ENCODE measurements at regions of chr13 and their contacts with region 1.

Region 1: DNA sequence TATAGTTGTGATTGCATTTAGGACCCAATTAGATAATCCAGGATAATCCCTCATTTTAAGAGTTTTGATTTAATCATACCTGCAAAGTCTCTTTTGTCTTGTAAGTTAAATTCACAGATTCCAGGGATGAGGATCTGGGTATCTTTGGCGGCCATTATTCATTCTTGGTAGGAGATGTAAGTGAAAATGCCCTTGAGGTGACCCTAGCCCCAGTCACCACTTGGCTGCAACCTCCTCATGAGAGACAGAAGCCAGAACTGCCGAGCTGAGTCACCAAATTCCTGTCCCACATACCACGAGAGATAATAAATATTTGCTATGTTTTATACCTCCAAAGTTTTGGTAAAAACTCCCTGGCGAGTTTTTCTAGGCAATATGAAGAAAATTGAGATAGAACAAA is 389.4 kb downstream of the RFC3 start:
- DNase-seq: no peak
- H3K4me3 ChIP-seq: no peak overlapping the region
- H3K27ac ChIP-seq: peak overlapping the region in 3 of 4 donors; percentile 68 to 83 (median 81)
- H3K4me1 ChIP-seq: peaks cover 0 to 48% (median 28%) of the 10 kb centered on the region in 4 donors
- H3K27me3 ChIP-seq: no peaks in the 10 kb centered on the region
- CTCF ChIP-seq: no peak
- EP300 ChIP-seq: peak in 3 of 4 donors; percentile 4 to 67 (median 19)
- POLR2A ChIP-seq: no peak

Region 2: GRCh38 chr13:33865945-33866344 is 341.4 kb before region 1 on chr13:
- intact Hi-C with region 1: no loop called
- DNase-seq: no peak
- H3K4me3 ChIP-seq: no peak overlapping the region
- H3K27ac ChIP-seq: no peak overlapping the region
- H3K4me1 ChIP-seq: no peaks in the 10 kb centered on the region
- H3K27me3 ChIP-seq: no peaks in the 10 kb centered on the region
- CTCF ChIP-seq: no peak
- EP300 ChIP-seq: no peak
- POLR2A ChIP-seq: no peak

Region 3: GRCh38 chr13:34161931-34162543 is 45.3 kb before region 1 on chr13:
- intact Hi-C with region 1: loop called (anchors 5 kb)
- DNase-seq: no peak
- H3K4me3 ChIP-seq: peak overlapping the region in 2 of 4 donors; percentile 1 to 5
- H3K27ac ChIP-seq: peak overlapping the region; percentile 73 to 90 (median 76)
- H3K4me1 ChIP-seq: peaks cover 0 to 44% (median 33%) of the 10 kb centered on the region in 4 donors
- H3K27me3 ChIP-seq: no peaks in the 10 kb centered on the region
- CTCF ChIP-seq: no peak
- EP300 ChIP-seq: peak in 2 of 4 donors; percentile 67
- POLR2A ChIP-seq: no peak